Astrocyte of the cerebellum (primary cell): ENCODE measurements at regions of chr17 and their contacts with region 1.

Region 1: GRCh38 chr17:79808763-79809529 is 12.1 kb upstream of the CBX8 start:
- DNase-seq: no peak
- H3K4me3 ChIP-seq: no peak overlapping the region
- CTCF ChIP-seq: peak; percentile 35

Region 2: GRCh38 chr17:79892459-79892858 is 83.5 kb after region 1 on chr17:
- in situ Hi-C with region 1: loop called (anchors 5 kb)
- DNase-seq: no peak
- H3K4me3 ChIP-seq: no peak overlapping the region
- CTCF ChIP-seq: no peak